ENCODE measurements at regions of chr18 and their contacts with region 1.

Region 1: GRCh38 chr18:46660955-46661749 is 4.1 kb upstream of the LOXHD1 start:
- DNase-seq: peak; percentile 67
- ATAC-seq: peak; percentile 62
- H3K4me3 Mint-ChIP-seq: no peak overlapping the region
- H3K27ac Mint-ChIP-seq: no peak overlapping the region
- H3K4me1 Mint-ChIP-seq: peaks cover 19% of the 10 kb centered on the region
- H3K27me3 Mint-ChIP-seq: peaks cover 7% of the 10 kb centered on the region
- CTCF ChIP-seq: no peak

Region 2: GRCh38 chr18:46310258-46310657 is 350.9 kb before region 1 on chr18:
- CTCF ChIA-PET with region 1: interaction called, 11 read pairs
- POLR2A ChIA-PET with region 1: no interaction called
- DNase-seq: no peak
- ATAC-seq: no peak
- H3K4me3 Mint-ChIP-seq: no peak overlapping the region
- H3K27ac Mint-ChIP-seq: no peak overlapping the region
- H3K4me1 Mint-ChIP-seq: peaks cover 21% of the 10 kb centered on the region
- H3K27me3 Mint-ChIP-seq: no peaks in the 10 kb centered on the region
- CTCF ChIP-seq: no peak

Region 3: DNA sequence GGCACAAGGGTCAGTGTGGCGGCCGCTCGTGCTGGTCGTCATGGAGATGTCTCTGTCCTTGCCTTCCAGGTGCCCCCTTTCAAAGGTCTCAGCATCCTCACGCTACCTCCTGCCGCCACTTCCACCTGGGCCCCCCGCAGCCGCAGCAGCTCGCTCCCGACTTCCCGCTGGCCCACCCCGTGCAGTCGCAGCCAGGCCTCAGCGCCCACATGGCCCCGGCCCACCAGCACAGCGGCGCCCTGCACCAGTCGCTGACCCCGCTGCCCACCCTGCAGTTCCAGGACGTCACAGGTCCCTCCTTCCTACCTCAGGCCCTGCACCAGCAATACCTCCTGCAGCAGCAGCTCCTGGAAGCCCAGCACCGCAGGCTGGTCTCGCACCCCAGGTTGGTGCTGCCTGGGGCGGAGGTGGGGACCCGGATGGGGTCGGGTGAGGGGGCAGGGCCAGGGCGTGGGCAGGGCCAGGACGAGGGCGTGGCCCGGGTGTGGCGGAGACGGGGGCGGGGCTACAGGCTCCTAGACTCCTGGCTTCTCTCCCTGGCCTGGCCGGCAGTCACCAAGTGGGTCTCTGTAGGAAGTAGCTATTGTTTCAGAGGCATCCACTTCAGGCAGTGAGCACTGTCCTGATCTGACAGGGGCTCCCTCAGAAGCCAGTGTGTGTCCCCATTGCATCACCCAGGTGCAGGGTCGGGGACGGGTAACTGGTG is 227.9 kb before region 1 on chr18:
- CTCF ChIA-PET with region 1: interaction called, 12 read pairs
- POLR2A ChIA-PET with region 1: no interaction called
- DNase-seq: peak; percentile 92
- ATAC-seq: peak; percentile 98
- H3K4me3 Mint-ChIP-seq: peak overlapping the region; percentile 49
- H3K27ac Mint-ChIP-seq: no peak overlapping the region
- H3K4me1 Mint-ChIP-seq: peaks cover 32% of the 10 kb centered on the region
- H3K27me3 Mint-ChIP-seq: no peaks in the 10 kb centered on the region
- CTCF ChIP-seq: no peak

Region 4: DNA sequence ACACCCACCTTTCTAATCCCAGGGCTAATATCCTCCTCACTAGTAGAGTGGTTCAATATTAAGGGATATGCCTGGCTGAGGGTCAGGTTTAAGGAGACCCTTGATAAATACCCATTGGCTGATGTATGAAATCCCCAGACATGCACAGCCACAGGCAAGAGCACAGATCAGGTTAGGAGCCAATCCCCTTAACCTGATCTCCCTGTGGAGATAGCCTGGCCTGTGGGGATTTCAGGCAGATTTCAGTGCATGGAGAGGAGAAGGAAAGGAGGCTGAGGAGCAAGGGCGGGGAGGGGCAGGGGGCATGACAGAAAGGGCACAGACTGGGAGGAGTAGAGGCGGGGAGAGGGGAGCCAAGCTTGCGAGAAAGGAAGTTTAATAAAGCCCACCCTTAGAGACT is 133.1 kb before region 1 on chr18:
- CTCF ChIA-PET with region 1: interaction called, 32 read pairs
- POLR2A ChIA-PET with region 1: no interaction called
- DNase-seq: no peak
- ATAC-seq: no peak
- H3K4me3 Mint-ChIP-seq: no peak overlapping the region
- H3K27ac Mint-ChIP-seq: peak overlapping the region; percentile 45; the same call in 1 of the 2 replicates
- H3K4me1 Mint-ChIP-seq: no peaks in the 10 kb centered on the region
- H3K27me3 Mint-ChIP-seq: no peaks in the 10 kb centered on the region
- CTCF ChIP-seq: no peak

Region 5: GRCh38 chr18:46609048-46609447 is 52.1 kb before region 1 on chr18:
- CTCF ChIA-PET with region 1: interaction called, 14 read pairs
- POLR2A ChIA-PET with region 1: no interaction called
- DNase-seq: no peak
- ATAC-seq: no peak
- H3K4me3 Mint-ChIP-seq: no peak overlapping the region
- H3K27ac Mint-ChIP-seq: no peak overlapping the region
- H3K4me1 Mint-ChIP-seq: no peaks in the 10 kb centered on the region
- H3K27me3 Mint-ChIP-seq: no peaks in the 10 kb centered on the region
- CTCF ChIP-seq: no peak

Region 6: DNA sequence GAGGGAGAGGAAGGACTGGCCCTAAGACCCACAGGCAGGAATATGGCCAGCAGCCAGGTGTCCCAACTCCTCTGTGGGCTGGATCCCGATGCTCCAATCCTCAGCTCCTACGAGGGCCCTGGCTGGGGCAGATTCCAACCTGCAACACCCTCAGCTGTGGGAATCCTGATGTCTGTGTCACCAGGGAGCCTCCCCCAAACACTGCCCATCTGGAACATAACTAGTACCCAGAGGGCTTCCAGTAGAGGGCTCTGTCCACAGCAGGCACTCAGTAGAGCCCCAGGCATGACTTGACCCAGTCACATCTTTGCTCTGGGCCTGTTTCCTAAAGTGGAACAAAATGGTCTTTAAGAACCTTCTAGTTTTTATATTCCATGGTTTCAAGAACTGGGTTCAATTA is 16.5 kb after region 1 on chr18:
- CTCF ChIA-PET with region 1: interaction called, 29 read pairs
- POLR2A ChIA-PET with region 1: no interaction called
- DNase-seq: no peak
- ATAC-seq: peak; percentile 67
- H3K4me3 Mint-ChIP-seq: no peak overlapping the region
- H3K27ac Mint-ChIP-seq: no peak overlapping the region
- H3K4me1 Mint-ChIP-seq: peaks cover 18% of the 10 kb centered on the region
- H3K27me3 Mint-ChIP-seq: no peaks in the 10 kb centered on the region; the same call in 1 of the 2 replicates
- CTCF ChIP-seq: no peak

Measured in WTC11 (cell line).